ENCODE measurements at regions of chr12 and their contacts with region 1.

Region 1: GRCh38 chr12:120292661-120293531 is at the start of gene RNU4-1:
- DNase-seq: peak; percentile 57
- ATAC-seq: peak; percentile 60
- H3K4me3 Mint-ChIP-seq: peak within 1 kb of the TSS; percentile 15
- H3K27ac Mint-ChIP-seq: no peak within 1 kb of the TSS
- H3K4me1 Mint-ChIP-seq: peaks cover 13% of the 10 kb centered on the region
- H3K27me3 Mint-ChIP-seq: no peaks in the 10 kb centered on the region
- CTCF ChIP-seq: no peak
- total RNA-seq, gene RNU4-1: 3,997 and 4,399 TPM in 2 replicates

Region 2: GRCh38 chr12:119988782-119989668 is 303.9 kb before region 1 on chr12 and contains the start of gene BICDL1:
- CTCF ChIA-PET with region 1: no interaction called
- POLR2A ChIA-PET with region 1: interaction called, 35 read pairs
- intact Hi-C with region 1: loop called (anchors 5 kb)
- DNase-seq: peak; percentile 96
- ATAC-seq: peak; percentile 83
- H3K4me3 Mint-ChIP-seq: peak within 1 kb of the TSS; percentile 83
- H3K27ac Mint-ChIP-seq: peak within 1 kb of the TSS; percentile 85
- H3K4me1 Mint-ChIP-seq: peaks cover 23% of the 10 kb centered on the region
- H3K27me3 Mint-ChIP-seq: no peaks in the 10 kb centered on the region
- CTCF ChIP-seq: no peak
- total RNA-seq, gene BICDL1: 15.1 and 16.8 TPM in 2 replicates

Region 3: GRCh38 chr12:120116792-120117651 is 175.9 kb before region 1 on chr12:
- CTCF ChIA-PET with region 1: no interaction called
- POLR2A ChIA-PET with region 1: interaction called, 59 read pairs
- intact Hi-C with region 1: loop called (anchors 5 kb)
- DNase-seq: peak; percentile 99
- ATAC-seq: peak; percentile 76
- H3K4me3 Mint-ChIP-seq: peak overlapping the region; percentile 78
- H3K27ac Mint-ChIP-seq: peak overlapping the region; percentile 83
- H3K4me1 Mint-ChIP-seq: peaks cover 76% of the 10 kb centered on the region
- H3K27me3 Mint-ChIP-seq: no peaks in the 10 kb centered on the region
- CTCF ChIP-seq: no peak

Region 4: DNA sequence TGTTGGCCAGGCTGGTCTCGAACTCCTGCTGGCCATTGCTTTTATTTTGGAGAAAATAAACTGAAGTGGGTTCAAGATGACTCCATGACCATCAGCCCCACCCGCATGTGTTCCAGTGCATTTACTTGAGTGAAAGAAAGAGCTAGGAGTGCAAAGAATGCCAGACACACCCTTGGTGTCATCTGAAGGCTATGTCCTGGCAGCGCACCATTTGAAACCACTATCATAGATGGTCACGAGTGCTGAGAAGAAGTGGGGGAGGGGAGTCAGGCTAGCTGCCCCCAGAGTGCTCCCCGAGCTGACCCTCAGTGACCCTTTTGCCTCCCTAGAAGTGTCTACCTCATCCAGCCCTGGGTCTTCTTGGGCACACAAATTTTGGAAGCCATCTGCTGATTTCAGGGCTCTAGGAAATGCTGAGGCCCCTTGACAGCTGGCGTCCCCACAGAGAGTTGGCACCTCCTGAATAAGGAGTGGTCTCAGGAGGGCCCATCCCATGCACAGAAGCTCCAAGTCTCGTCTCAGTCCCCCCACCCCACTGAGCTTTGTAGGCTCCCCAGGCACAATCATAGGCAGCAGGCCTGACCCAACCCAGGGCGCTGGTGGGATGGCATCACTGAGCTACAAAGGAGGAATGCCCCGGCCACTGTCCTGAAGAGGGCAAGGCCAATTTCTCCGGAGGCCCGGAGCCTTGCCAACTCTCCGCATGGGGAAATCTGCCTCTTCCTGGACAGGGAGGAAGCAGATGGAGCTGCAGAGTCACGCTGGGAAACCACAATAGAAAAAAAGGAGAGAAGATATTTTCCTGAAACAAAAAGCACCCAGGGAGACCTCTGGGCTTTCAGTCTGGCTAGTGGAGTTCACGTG is 55.3 kb before region 1 on chr12:
- CTCF ChIA-PET with region 1: no interaction called
- POLR2A ChIA-PET with region 1: interaction called, 15 read pairs
- intact Hi-C with region 1: no loop called
- DNase-seq: no peak
- ATAC-seq: no peak
- H3K4me3 Mint-ChIP-seq: no peak overlapping the region
- H3K27ac Mint-ChIP-seq: no peak overlapping the region
- H3K4me1 Mint-ChIP-seq: peaks cover 9% of the 10 kb centered on the region
- H3K27me3 Mint-ChIP-seq: peaks cover 66% of the 10 kb centered on the region
- CTCF ChIP-seq: no peak

Region 5: GRCh38 chr12:120317224-120318105 is 24.6 kb after region 1 on chr12:
- CTCF ChIA-PET with region 1: interaction called, 7 read pairs
- POLR2A ChIA-PET with region 1: interaction called, 74 read pairs
- intact Hi-C with region 1: loop called (anchors 1 kb)
- DNase-seq: peak; percentile 100
- ATAC-seq: peak; percentile 99
- H3K4me3 Mint-ChIP-seq: peak overlapping the region; percentile 88
- H3K27ac Mint-ChIP-seq: peak overlapping the region; percentile 90
- H3K4me1 Mint-ChIP-seq: peaks cover 13% of the 10 kb centered on the region
- H3K27me3 Mint-ChIP-seq: peaks cover 1% of the 10 kb centered on the region
- CTCF ChIP-seq: no peak

Region 6: DNA sequence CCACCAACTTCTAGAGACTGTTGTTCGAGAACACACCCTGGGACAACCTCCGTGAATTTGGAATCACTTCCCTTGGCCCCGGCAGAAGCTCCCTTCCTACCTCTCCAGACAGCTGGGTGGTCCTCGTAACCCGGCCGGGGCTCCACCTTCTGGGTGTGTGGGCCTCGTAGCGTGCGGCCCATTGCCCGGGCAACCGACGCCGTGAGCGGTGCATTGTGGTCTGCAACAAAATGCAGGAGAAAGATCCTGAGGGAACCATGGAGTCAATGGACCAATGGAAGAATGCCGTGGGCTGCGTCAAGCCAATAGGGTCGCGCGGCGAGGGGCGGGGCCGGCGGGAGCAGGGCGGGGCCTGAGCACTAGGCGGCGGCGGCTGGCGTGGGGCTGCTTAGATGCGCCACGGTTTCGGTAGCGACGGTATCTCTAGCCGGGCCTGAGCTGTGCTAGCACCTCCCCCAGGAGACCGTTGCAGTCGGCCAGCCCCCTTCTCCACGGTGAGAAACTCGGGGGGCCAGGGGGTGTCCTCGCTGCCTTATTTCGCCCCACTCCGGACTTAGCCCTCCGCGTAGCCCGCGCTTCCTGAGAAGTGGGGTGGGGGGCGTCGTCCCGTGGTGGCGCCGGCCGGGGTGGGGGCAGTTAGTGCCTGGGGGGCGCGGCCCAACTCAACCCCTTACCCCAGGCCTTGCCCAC is 203.0 kb after region 1 on chr12 and contains the start of gene DYNLL1:
- CTCF ChIA-PET with region 1: no interaction called
- POLR2A ChIA-PET with region 1: interaction called, 19 read pairs
- intact Hi-C with region 1: no loop called
- DNase-seq: peak; percentile 99
- ATAC-seq: peak; percentile 96
- H3K4me3 Mint-ChIP-seq: peak within 1 kb of the TSS; percentile 96
- H3K27ac Mint-ChIP-seq: peak within 1 kb of the TSS; percentile 91
- H3K4me1 Mint-ChIP-seq: peaks cover 29% of the 10 kb centered on the region
- H3K27me3 Mint-ChIP-seq: no peaks in the 10 kb centered on the region
- CTCF ChIP-seq: no peak
- total RNA-seq, gene DYNLL1: 159 and 180 TPM in 2 replicates

Region 7: DNA sequence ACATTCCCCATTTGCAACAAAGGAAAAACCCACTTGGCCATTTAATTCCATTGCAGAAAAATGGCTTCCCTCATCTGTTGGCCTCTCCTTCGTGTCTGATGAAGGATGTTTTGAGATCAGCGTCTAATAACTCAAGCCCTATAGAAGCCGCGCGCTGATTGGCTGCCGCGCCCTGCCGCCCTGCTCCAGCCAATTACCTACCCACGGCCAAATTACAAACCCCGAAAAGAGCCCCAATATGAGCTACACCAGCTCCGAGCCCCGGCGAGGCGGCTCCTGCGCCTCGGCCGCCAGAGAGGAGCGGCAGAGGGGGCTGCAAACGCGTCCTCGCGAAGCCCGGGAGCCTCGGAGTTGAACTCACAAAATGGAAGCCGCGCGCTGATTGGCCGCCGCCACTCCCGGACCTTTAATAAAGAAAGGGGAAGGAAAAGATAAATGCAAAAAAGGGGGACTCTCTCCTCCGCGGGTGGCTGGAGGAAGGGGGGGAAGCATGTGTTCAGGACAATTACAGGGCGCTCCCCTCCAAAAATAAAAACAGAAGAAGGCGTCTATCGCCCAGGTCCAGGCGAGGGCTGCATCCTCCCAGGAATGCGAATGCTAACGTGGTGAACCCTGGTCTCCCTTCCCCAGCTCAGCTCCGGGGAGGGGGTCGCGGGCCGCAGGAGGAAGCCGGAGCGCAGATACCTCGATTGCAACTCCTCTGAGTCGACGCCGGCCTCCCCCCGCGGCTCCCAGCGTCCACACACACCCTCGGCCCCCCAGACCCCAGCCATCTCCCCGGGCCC is 1510.1 kb after region 1 on chr12:
- CTCF ChIA-PET with region 1: no interaction called
- POLR2A ChIA-PET with region 1: interaction called, 14 read pairs
- intact Hi-C with region 1: loop called (anchors 5 kb)
- DNase-seq: peak; percentile 91
- ATAC-seq: peak; percentile 40
- H3K4me3 Mint-ChIP-seq: peak overlapping the region; percentile 93
- H3K27ac Mint-ChIP-seq: peak overlapping the region; percentile 100
- H3K4me1 Mint-ChIP-seq: peaks cover 57% of the 10 kb centered on the region
- H3K27me3 Mint-ChIP-seq: no peaks in the 10 kb centered on the region
- CTCF ChIP-seq: no peak